Gastrocnemius medialis (tissue), 4 donors: ENCODE measurements at regions of chr15 and their contacts with region 1.

Region 1: DNA sequence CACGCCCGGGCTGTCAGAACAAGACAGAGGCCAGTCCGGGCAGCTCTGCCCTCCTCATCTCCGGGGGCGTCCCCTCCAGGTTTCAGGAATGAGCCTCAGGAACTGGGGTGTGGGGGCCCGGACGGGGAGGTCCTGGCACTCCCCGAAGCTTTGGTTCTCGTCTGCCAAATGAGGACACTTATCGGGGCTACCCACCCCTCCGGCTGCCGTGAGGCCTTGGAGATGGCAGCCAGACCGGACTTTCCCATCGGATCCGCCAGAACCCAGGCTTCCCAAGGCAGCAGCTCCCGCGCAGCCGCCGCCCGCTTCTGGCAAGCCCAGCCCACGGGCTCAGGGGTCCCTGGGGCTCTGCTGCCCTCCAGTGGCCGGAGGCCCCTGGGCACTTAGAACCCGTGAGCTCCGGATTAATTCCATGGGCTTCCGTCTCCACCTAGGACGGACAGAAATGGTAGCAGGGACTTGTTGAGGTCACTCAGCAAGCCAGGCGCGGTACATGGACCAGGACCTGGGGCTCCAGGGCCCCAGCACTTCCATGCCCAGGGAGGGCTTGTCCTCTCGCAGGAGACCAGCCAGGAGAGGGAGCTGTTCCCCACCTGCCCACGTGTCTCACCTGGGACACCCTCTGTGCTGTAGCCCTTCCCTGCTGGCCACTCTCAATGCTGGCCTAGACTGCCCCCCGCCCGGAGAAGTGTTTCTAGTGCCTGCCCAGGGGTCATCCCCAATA is 89.4 kb downstream of the LINGO1 start:
- DNase-seq: peak; percentile 48 to 70
- ATAC-seq: peak; percentile 88 to 92
- H3K4me3 ChIP-seq: peak overlapping the region; percentile 39 to 53 (median 50)
- H3K27ac ChIP-seq: peak overlapping the region; percentile 8 to 57 (median 26)
- H3K4me1 ChIP-seq: peaks cover 6 to 17% of the 10 kb centered on the region in 2 donors
- H3K27me3 ChIP-seq: no peaks in the 10 kb centered on the region
- CTCF ChIP-seq: peak; percentile 97 to 99 (median 98)
- POLR2A ChIP-seq: no peak

Region 2: DNA sequence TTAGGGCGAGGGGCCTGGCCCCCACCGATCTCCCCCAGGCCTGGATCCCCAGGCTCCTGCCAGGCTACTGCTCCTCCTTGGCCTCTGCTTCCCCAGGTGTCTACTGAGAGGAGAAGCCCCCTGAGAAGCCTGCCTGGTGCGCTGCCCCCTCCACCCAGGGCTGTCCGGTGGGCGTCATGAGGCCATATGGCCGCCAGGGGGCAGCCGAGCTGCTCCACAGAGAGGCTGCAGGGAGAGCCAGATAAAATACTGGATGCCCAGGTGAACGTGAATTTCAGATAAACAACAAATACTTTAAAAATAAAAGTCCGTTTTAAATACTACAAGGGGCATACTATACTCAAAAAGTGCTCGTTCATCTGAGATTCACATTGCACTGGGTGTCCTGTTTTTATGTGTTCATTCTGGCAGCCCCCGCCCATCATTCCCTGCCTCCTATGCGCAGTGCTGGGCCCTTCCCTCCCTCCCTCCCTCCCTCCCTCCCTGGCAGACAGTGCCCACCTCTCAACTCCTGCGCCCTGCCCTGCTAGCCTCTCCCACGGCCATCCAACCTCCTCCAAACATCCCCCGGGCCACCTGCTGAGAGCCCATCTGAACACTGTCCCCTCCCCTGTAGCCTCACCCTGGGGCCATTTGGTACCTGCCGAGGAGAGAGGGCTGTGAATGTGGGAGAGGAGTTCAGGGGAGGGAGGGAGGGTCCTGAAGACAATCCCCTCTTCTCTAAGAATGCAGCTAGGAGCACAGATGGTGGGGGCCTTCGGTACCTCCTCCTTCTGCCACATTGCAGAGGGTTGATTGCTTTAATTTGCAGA is 518.8 kb before region 1 on chr15:
- in situ Hi-C with region 1: loop called in 3 of 4 experiments (anchors 10 kb)
- intact Hi-C with region 1: loop called (anchors 1 kb)
- DNase-seq: peak in 1 of 2 donors; percentile 56
- ATAC-seq: peak; percentile 58 to 72
- H3K4me3 ChIP-seq: no peak overlapping the region
- H3K27ac ChIP-seq: no peak overlapping the region
- H3K4me1 ChIP-seq: peaks cover 0 to 10% of the 10 kb centered on the region in 2 donors
- H3K27me3 ChIP-seq: no peaks in the 10 kb centered on the region
- CTCF ChIP-seq: peak; percentile 86 to 98 (median 95)
- POLR2A ChIP-seq: no peak

Region 3: DNA sequence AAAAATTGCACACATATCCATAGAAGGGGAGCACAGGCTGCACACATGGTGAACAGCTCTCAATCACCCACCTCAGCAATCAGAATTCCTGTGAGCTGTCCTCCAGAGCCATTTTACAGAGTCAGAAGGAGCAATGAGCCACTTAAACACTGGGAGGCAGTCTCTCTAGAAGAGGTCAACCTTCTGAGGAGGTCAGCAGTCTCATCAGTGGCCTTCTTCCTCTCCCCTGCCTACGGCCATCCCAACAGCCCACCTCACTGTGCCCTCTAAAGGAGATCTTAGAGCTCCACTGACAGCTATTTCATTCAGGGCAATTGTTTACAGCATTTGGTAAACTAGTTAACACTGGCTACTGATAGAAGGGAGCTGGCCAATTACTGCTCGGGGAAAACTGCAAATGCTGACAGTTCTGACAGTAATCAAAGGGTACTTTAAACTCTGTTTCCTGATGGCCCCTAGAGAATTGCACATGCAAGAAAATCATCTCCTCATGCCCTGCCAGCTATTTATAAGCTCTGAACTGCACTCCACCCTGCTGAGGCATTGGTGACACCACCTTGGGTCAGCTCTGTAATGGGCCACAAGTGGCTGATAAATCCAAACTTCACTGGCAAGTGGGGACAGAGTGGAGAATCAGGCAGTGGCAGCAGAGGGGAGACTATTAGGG is 430.4 kb before region 1 on chr15:
- in situ Hi-C with region 1: loop called (anchors 5 to 25 kb)
- intact Hi-C with region 1: no loop called
- DNase-seq: no peak
- ATAC-seq: no peak
- H3K4me3 ChIP-seq: no peak overlapping the region
- H3K27ac ChIP-seq: no peak overlapping the region
- H3K4me1 ChIP-seq: peaks cover 1 to 9% of the 10 kb centered on the region in 2 donors
- H3K27me3 ChIP-seq: no peaks in the 10 kb centered on the region
- CTCF ChIP-seq: no peak
- POLR2A ChIP-seq: no peak

Region 4: GRCh38 chr15:77186594-77187011 is 356.7 kb before region 1 on chr15:
- in situ Hi-C with region 1: loop called in 1 of 4 experiments (anchors 10 kb)
- intact Hi-C with region 1: loop called (anchors 1 kb)
- DNase-seq: no peak
- ATAC-seq: no peak
- H3K4me3 ChIP-seq: no peak overlapping the region
- H3K27ac ChIP-seq: peak overlapping the region; percentile 3 to 79 (median 72)
- H3K4me1 ChIP-seq: peaks cover 3 to 18% of the 10 kb centered on the region in 2 donors
- H3K27me3 ChIP-seq: no peaks in the 10 kb centered on the region
- CTCF ChIP-seq: peak in 4 of 5 experiments; percentile 41 to 54 (median 48)
- POLR2A ChIP-seq: no peak

Region 5: GRCh38 chr15:77496710-77497103 is 46.6 kb before region 1 on chr15:
- in situ Hi-C with region 1: no loop called
- intact Hi-C with region 1: loop called (anchors 2 kb)
- DNase-seq: peak; percentile 65 to 80
- ATAC-seq: peak; percentile 71 to 78
- H3K4me3 ChIP-seq: peak overlapping the region in 3 of 4 donors; percentile 4 to 26 (median 18)
- H3K27ac ChIP-seq: peak overlapping the region; percentile 66 to 82 (median 74)
- H3K4me1 ChIP-seq: peaks cover 38 to 42% of the 10 kb centered on the region in 2 donors
- H3K27me3 ChIP-seq: no peaks in the 10 kb centered on the region
- CTCF ChIP-seq: peak; percentile 80 to 94 (median 91)
- POLR2A ChIP-seq: no peak

Region 6: GRCh38 chr15:77659350-77660321 is 116.3 kb after region 1 on chr15:
- in situ Hi-C with region 1: no loop called
- intact Hi-C with region 1: no loop called
- DNase-seq: no peak
- ATAC-seq: no peak
- H3K4me3 ChIP-seq: no peak overlapping the region
- H3K27ac ChIP-seq: no peak overlapping the region
- H3K4me1 ChIP-seq: no peaks in the 10 kb centered on the region
- H3K27me3 ChIP-seq: peaks cover 11 to 31% (median 29%) of the 10 kb centered on the region in 3 donors
- CTCF ChIP-seq: peak in 2 of 5 experiments; percentile 6 to 34
- POLR2A ChIP-seq: no peak